Activated CD4-positive, alpha-beta memory T cell treated with anti-CD3 and anti-CD28 coated beads for 36 hours (primary cell): ENCODE measurements at regions of chr1 and their contacts with region 1.

Region 1: DNA sequence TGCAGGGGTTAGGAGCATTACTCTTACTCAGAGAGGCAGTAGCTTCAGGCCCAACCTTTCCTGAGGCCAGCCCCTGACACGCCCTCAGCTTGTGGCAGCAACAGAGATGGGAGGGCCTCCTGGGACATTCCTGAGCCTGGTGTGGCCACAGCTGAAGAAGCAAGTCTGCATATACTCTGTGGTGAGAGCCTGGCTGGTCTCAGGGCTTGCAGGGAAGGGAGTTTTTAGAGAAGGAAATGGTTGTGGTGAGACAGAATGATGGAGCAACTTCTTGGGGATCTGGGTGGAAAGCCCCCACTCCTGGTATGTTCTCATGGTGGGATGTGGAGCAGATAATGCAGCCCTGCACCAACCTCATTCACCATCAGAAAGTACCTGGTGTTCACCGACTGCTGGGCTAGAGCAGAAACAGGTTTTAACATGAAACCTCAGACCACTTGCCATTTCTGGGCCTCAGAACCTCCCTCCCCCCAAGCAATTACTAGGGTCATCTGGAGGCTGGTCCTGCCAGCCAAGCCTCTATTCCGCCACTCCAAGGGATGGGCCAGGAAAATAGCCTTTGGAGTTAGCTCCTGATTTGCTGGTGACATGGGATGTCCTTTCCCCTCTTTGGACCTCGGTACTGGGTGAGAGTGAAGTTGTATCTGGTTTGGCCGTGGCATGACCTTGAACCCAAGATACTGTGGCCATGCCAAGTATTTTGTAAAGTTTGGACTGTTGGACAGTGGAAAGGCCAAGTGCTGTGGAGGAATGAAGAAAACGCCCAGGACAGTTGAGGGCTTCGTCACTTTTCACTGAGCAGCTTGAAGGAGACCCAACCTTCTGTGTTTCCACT is 28.1 kb upstream of the RNF19B start:
- DNase-seq: peak; percentile 91
- H3K4me3 Mint-ChIP-seq: peak overlapping the region; percentile 32
- H3K27ac Mint-ChIP-seq: peak overlapping the region; percentile 93
- H3K4me1 Mint-ChIP-seq: peaks cover 62% of the 10 kb centered on the region
- H3K27me3 Mint-ChIP-seq: no peaks in the 10 kb centered on the region

Region 2: GRCh38 chr1:32898958-32899357 is 93.7 kb before region 1 on chr1:
- CTCF ChIA-PET with region 1: no interaction called
- POLR2A ChIA-PET with region 1: no interaction called
- intact Hi-C with region 1: no loop called
- DNase-seq: no peak
- H3K4me3 Mint-ChIP-seq: no peak overlapping the region
- H3K27ac Mint-ChIP-seq: no peak overlapping the region
- H3K4me1 Mint-ChIP-seq: peaks cover 6% of the 10 kb centered on the region
- H3K27me3 Mint-ChIP-seq: peaks cover 46% of the 10 kb centered on the region

Region 3: GRCh38 chr1:32981003-32981901 is 11.5 kb before region 1 on chr1:
- CTCF ChIA-PET with region 1: interaction called, 8 read pairs
- POLR2A ChIA-PET with region 1: interaction called, 21 read pairs
- intact Hi-C with region 1: loop called (anchors 1 kb)
- DNase-seq: peak; percentile 84
- H3K4me3 Mint-ChIP-seq: peak overlapping the region; percentile 53
- H3K27ac Mint-ChIP-seq: peak overlapping the region; percentile 88
- H3K4me1 Mint-ChIP-seq: peaks cover 57% of the 10 kb centered on the region
- H3K27me3 Mint-ChIP-seq: no peaks in the 10 kb centered on the region

Region 4: GRCh38 chr1:33007190-33008050 is 14.7 kb after region 1 on chr1:
- CTCF ChIA-PET with region 1: interaction called, 3 read pairs
- POLR2A ChIA-PET with region 1: interaction called, 5 read pairs
- intact Hi-C with region 1: loop called (anchors 1 kb)
- DNase-seq: peak; percentile 40
- H3K4me3 Mint-ChIP-seq: no peak overlapping the region
- H3K27ac Mint-ChIP-seq: no peak overlapping the region
- H3K4me1 Mint-ChIP-seq: peaks cover 41% of the 10 kb centered on the region
- H3K27me3 Mint-ChIP-seq: no peaks in the 10 kb centered on the region

Region 5: GRCh38 chr1:33319949-33320605 is 327.4 kb after region 1 on chr1:
- CTCF ChIA-PET with region 1: no interaction called
- POLR2A ChIA-PET with region 1: no interaction called
- intact Hi-C with region 1: no loop called
- DNase-seq: no peak
- H3K4me3 Mint-ChIP-seq: no peak overlapping the region
- H3K27ac Mint-ChIP-seq: no peak overlapping the region
- H3K4me1 Mint-ChIP-seq: peaks cover 5% of the 10 kb centered on the region
- H3K27me3 Mint-ChIP-seq: no peaks in the 10 kb centered on the region

Region 6: DNA sequence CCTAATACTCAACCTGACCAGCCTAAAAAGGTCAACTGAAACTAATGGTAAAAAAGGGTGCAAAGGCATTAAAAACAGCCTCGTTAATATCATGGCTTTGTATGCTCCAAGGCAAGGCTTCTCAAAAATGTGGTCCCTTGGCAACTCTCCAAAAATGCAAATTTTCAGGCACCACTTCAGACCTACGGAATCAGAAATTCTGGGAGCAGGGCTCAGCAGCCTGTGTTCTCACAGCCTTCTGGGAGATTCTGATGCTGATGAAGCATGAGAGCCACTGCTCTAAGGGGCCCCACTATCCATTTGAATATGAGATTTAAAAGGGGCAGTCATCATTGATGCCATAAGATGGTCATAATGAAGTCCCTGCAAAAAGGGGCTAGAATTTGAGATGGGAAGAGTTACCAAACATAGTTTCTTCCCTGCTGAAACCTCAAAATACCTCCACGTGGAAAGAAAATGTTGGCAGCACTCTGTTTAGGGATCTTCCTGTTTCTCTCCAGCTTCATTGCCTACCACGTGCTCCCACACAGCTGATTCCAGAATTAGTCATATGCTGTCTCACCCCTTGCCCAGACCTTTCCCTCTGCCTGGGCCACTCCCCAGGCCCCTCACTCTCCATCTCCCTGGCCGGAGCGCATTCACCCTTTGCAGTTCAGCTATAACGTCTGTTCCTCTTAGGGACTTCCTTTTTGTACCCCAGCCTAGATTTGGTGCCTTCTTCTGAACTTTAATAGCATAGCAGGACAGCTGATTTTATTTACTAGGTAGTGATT is 391.5 kb after region 1 on chr1:
- CTCF ChIA-PET with region 1: no interaction called
- POLR2A ChIA-PET with region 1: no interaction called
- intact Hi-C with region 1: no loop called
- DNase-seq: no peak
- H3K4me3 Mint-ChIP-seq: no peak overlapping the region
- H3K27ac Mint-ChIP-seq: no peak overlapping the region
- H3K4me1 Mint-ChIP-seq: peaks cover 6% of the 10 kb centered on the region
- H3K27me3 Mint-ChIP-seq: peaks cover 13% of the 10 kb centered on the region